CD8-positive, alpha-beta memory T cell (primary cell): ENCODE measurements at regions of chr3 and their contacts with region 1.

Region 1: GRCh38 chr3:14124615-14125190 is at the starts of genes CHCHD4 and TMEM43:
- DNase-seq: peak; percentile 97 to 100 (median 98)
- H3K4me3 ChIP-seq: peak within 1 kb of the TSS; percentile 99
- H3K4me3 Mint-ChIP-seq: peak within 1 kb of the TSS; percentile 93 to 99 (median 97)
- H3K27ac ChIP-seq: peak within 1 kb of the TSS; percentile 94
- H3K27ac Mint-ChIP-seq: peak within 1 kb of the TSS; percentile 95 to 99 (median 98)
- H3K4me1 ChIP-seq: peaks cover 34% of the 10 kb centered on the region
- H3K4me1 Mint-ChIP-seq: peaks cover 54 to 73% (median 65%) of the 10 kb centered on the region in 3 donors
- H3K27me3 ChIP-seq: no peaks in the 10 kb centered on the region
- H3K27me3 Mint-ChIP-seq: peaks cover 0 to 5% of the 10 kb centered on the region in 2 donors
- total RNA-seq, gene CHCHD4: 21.7 to 21.8 TPM
- total RNA-seq, gene TMEM43: 48.8 to 49.4 TPM

Region 2: GRCh38 chr3:14057701-14058100 is 67.0 kb before region 1 on chr3:
- CTCF ChIA-PET with region 1: no interaction called
- POLR2A ChIA-PET with region 1: no interaction called
- DNase-seq: no peak
- H3K4me3 ChIP-seq: no peak overlapping the region
- H3K4me3 Mint-ChIP-seq: no peak overlapping the region
- H3K27ac ChIP-seq: no peak overlapping the region
- H3K27ac Mint-ChIP-seq: no peak overlapping the region
- H3K4me1 ChIP-seq: no peaks in the 10 kb centered on the region
- H3K4me1 Mint-ChIP-seq: no peaks in the 10 kb centered on the region
- H3K27me3 ChIP-seq: no peaks in the 10 kb centered on the region
- H3K27me3 Mint-ChIP-seq: peaks cover 18 to 23% of the 10 kb centered on the region in 2 donors

Region 3: GRCh38 chr3:14144423-14145075 is 19.8 kb after region 1 on chr3:
- CTCF ChIA-PET with region 1: interaction called, 21 read pairs
- POLR2A ChIA-PET with region 1: interaction called, 20 read pairs
- DNase-seq: peak; percentile 66 to 94 (median 86)
- H3K4me3 ChIP-seq: peak overlapping the region; percentile 10
- H3K4me3 Mint-ChIP-seq: peak overlapping the region; percentile 57 to 91 (median 83)
- H3K27ac ChIP-seq: peak overlapping the region; percentile 94
- H3K27ac Mint-ChIP-seq: peak overlapping the region; percentile 98 to 100 (median 100)
- H3K4me1 ChIP-seq: peaks cover 55% of the 10 kb centered on the region
- H3K4me1 Mint-ChIP-seq: peaks cover 56 to 66% (median 65%) of the 10 kb centered on the region in 3 donors
- H3K27me3 ChIP-seq: no peaks in the 10 kb centered on the region
- H3K27me3 Mint-ChIP-seq: peaks cover 0 to 4% of the 10 kb centered on the region in 2 donors